GM18951 (cell line): ENCODE measurements at regions of chr10 and their contacts with region 1.

Region 1: GRCh38 chr10:104300736-104301292 is 31.8 kb downstream of the GSTO2 start:
- POLR2A ChIP-seq: no peak

Region 2: GRCh38 chr10:103382769-103383168 is 918.0 kb before region 1 on chr10:
- in situ Hi-C with region 1: no loop called
- POLR2A ChIP-seq: no peak

Region 3: DNA sequence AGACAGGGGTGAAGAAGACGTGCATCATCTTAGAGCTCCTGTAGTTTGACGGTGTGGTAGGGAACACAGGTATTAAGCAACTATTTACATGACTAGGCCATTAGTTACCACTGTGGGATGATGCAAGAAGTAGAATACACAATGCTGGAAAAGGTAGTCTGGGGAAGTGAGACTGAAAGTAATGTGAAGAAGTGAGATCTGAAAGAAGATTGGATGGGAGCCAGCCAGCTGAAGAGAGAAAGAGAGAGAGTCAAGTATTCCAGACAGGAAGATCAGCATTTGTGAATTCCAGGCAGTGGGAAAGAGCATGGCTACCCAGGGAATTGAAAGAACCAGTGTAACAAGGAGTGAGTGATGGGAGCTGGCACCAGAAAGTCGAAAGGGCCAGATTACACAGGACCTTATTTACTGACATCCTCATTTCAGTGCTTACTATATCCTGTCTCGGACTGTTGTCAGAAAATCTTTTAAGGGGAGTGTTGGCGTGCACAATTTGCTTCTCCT is 48.9 kb after region 1 on chr10:
- in situ Hi-C with region 1: loop called (anchors 5 kb)
- POLR2A ChIP-seq: no peak